Activated T-helper 2 cell treated with anti-CD3 and anti-CD28 coated beads, Interferon-gamma antibody, Interleukin-2, Interleukin-4, amounts not matched to agents 10 μg/mL and 5 μg/mL and 100 μg/mL, durations not matched to agents 14 hours and 24 hours and 36 hours (primary cell): ENCODE measurements at regions of chr4 and their contacts with region 1.

Region 1: DNA sequence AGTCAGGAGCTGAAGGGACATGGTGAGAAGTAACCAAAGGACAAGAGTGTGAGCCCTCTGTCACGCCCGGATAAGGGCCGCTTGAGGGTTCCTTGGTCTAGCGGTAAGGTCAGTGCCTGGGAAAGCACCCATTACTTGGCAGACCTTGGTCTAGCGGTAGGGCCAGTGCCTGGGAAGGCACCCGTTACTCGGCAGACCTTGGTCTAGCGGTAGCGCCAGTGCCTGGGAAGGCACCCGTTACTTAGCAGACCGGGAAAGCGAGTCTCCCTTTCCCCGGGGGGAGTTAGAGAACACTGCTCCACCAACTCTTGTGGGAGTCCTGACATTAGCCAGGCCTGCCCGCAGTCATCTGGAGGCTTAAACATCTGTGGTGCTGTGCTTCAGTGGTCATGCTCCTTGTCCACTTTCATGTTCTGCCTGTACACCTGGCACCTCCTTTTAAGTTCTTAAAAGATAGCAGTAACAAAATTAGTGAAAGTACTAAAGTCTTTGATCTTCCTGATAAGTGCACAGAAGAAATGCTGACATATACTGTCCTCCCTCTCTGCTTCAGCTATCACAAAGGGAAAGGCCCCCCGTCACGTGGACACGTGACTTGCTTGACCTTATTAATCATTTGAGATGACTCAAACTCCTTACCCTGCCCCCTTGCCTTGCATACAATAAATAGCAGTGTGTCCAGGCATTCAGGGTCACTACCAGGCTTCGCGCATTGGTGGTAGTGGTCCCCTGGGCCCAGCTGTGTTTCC is 9.3 kb upstream of the SEC24B start:
- DNase-seq: no peak
- H3K4me3 Mint-ChIP-seq: no peak overlapping the region
- H3K27ac Mint-ChIP-seq: no peak overlapping the region
- H3K4me1 Mint-ChIP-seq: peaks cover 6% of the 10 kb centered on the region
- H3K27me3 Mint-ChIP-seq: peaks cover 2% of the 10 kb centered on the region

Region 2: GRCh38 chr4:109368661-109369060 is 55.6 kb before region 1 on chr4:
- intact Hi-C with region 1: no loop called
- DNase-seq: no peak
- H3K4me3 Mint-ChIP-seq: no peak overlapping the region
- H3K27ac Mint-ChIP-seq: no peak overlapping the region
- H3K4me1 Mint-ChIP-seq: no peaks in the 10 kb centered on the region
- H3K27me3 Mint-ChIP-seq: peaks cover 48% of the 10 kb centered on the region

Region 3: DNA sequence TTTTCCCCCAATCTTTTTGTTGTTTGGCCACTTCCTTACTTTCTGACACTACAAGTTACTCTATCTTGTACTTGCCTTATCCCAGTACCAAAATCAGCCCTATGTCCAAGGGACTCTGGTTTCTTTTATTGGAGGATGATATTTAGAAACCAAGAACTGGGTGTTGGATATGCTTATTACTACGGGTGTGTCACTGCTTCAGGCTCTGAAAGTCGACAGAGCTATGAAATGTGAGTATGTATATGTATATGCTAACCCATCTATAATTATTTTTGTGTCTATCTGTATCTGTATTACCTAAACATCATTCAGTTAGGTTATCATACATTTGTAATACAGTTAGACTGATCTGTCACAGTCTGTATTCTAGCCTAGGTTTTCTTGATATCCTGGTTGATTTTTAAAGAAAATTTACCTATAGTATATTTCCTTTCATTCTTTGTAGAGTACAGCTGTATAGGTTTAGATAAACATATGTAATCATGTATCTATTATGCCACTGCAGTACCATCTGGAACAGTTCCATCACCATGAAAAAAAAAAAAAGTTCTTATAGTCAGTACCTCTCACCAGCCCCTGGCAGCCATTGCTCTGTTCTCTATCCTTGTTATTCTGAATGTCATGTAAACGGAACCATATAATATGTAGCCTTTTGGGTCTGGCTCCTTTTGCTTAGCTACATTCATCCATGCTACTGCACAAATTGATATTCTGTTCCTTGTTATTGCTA is 27.4 kb after region 1 on chr4:
- intact Hi-C with region 1: no loop called
- DNase-seq: no peak
- H3K4me3 Mint-ChIP-seq: no peak overlapping the region
- H3K27ac Mint-ChIP-seq: no peak overlapping the region
- H3K4me1 Mint-ChIP-seq: peaks cover 12% of the 10 kb centered on the region
- H3K27me3 Mint-ChIP-seq: no peaks in the 10 kb centered on the region

Region 4: GRCh38 chr4:109826719-109827118 is 402.5 kb after region 1 on chr4:
- intact Hi-C with region 1: loop called (anchors 1 kb)
- DNase-seq: no peak
- H3K4me3 Mint-ChIP-seq: no peak overlapping the region
- H3K27ac Mint-ChIP-seq: no peak overlapping the region
- H3K4me1 Mint-ChIP-seq: peaks cover 4% of the 10 kb centered on the region
- H3K27me3 Mint-ChIP-seq: no peaks in the 10 kb centered on the region

Region 5: DNA sequence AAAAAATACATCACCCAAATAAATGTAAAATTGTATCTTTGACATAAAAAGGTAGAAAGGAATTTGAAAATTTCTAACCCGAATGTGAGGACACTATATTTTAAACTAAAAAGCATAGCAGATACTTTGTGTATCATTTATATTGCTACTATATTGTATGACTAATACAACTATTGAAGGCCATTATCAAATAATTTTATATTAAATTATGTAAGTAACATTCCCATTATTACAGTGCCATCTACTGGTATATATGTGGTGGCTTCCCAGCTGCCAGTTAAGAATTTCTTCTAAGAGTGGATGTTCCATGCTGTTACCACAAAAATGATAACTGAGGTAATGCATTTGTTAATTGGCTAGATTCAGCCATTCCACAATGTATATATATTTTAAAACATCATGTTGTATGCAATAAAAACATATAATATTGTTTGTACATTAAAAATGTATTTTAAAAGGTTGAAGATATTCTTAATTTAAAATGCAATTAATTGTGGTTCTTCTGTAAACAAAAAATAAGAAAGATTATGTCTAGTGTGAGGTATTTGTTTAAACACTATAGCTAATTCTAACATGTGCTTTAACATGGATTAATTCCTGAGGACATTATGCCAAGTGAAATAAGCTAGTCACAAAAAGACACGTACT is 553.7 kb after region 1 on chr4:
- intact Hi-C with region 1: loop called (anchors 1 kb)
- DNase-seq: no peak
- H3K4me3 Mint-ChIP-seq: no peak overlapping the region
- H3K27ac Mint-ChIP-seq: no peak overlapping the region
- H3K4me1 Mint-ChIP-seq: peaks cover 5% of the 10 kb centered on the region
- H3K27me3 Mint-ChIP-seq: peaks cover 38% of the 10 kb centered on the region